Activated CD4-positive, alpha-beta T cell treated with anti-CD3 and anti-CD28 coated beads, Interleukin-2, amount 10 ng/mL, durations not matched to agents 24 days and 14 days (primary cell): ENCODE measurements at regions of chr6 and their contacts with region 1.

Region 1: DNA sequence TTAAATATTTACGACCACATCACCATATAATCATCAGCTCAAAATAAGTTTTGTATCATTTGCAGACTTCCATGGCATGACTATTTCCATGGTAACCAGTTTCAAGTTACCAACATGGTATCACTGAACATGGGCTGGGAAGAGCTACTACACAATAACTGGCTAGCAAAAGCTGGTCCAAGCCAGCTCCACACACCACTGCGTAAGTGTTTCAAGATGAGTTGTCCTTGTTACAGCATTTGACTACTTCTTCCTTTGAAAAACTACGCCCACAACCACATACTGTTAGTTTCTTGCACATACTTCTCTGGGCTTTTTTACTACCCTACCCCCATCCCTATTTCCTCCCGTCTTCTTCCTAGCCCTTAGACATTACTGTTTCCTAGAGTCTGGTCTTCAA is 8.5 kb downstream of the CD164 start:
- DNase-seq: peak; percentile 82
- H3K4me3 Mint-ChIP-seq: peak overlapping the region; percentile 85
- H3K27ac Mint-ChIP-seq: peak overlapping the region; percentile 99
- H3K4me1 Mint-ChIP-seq: peaks cover 56% of the 10 kb centered on the region
- H3K27me3 Mint-ChIP-seq: no peaks in the 10 kb centered on the region

Region 2: GRCh38 chr6:108883172-108883571 is 490.6 kb before region 1 on chr6:
- intact Hi-C with region 1: loop called (anchors 1 kb)
- DNase-seq: no peak
- H3K4me3 Mint-ChIP-seq: peak overlapping the region; percentile 24
- H3K27ac Mint-ChIP-seq: peak overlapping the region; percentile 87
- H3K4me1 Mint-ChIP-seq: peaks cover 31% of the 10 kb centered on the region
- H3K27me3 Mint-ChIP-seq: peaks cover 28% of the 10 kb centered on the region

Region 3: GRCh38 chr6:109095027-109095834 is 278.5 kb before region 1 on chr6 and contains the start of gene CEP57L1:
- intact Hi-C with region 1: loop called (anchors 2 kb)
- DNase-seq: peak; percentile 98
- H3K4me3 Mint-ChIP-seq: peak within 1 kb of the TSS; percentile 90
- H3K27ac Mint-ChIP-seq: peak within 1 kb of the TSS; percentile 100
- H3K4me1 Mint-ChIP-seq: peaks cover 53% of the 10 kb centered on the region
- H3K27me3 Mint-ChIP-seq: no peaks in the 10 kb centered on the region
- total RNA-seq, gene CEP57L1: 14.2 and 15.3 TPM in 2 replicates

Region 4: GRCh38 chr6:109187399-109188114 is 186.2 kb before region 1 on chr6:
- intact Hi-C with region 1: loop called (anchors 2 kb)
- DNase-seq: peak; percentile 87
- H3K4me3 Mint-ChIP-seq: no peak overlapping the region
- H3K27ac Mint-ChIP-seq: no peak overlapping the region
- H3K4me1 Mint-ChIP-seq: no peaks in the 10 kb centered on the region
- H3K27me3 Mint-ChIP-seq: peaks cover 36% of the 10 kb centered on the region

Region 5: GRCh38 chr6:109202409-109203284 is 171.1 kb before region 1 on chr6:
- intact Hi-C with region 1: loop called (anchors 1 kb)
- DNase-seq: no peak
- H3K4me3 Mint-ChIP-seq: no peak overlapping the region
- H3K27ac Mint-ChIP-seq: peak overlapping the region; percentile 78
- H3K4me1 Mint-ChIP-seq: peaks cover 3% of the 10 kb centered on the region
- H3K27me3 Mint-ChIP-seq: peaks cover 1% of the 10 kb centered on the region

Region 6: GRCh38 chr6:109308018-109308492 is 65.7 kb before region 1 on chr6:
- intact Hi-C with region 1: loop called (anchors 2 kb)
- DNase-seq: no peak
- H3K4me3 Mint-ChIP-seq: no peak overlapping the region
- H3K27ac Mint-ChIP-seq: no peak overlapping the region
- H3K4me1 Mint-ChIP-seq: peaks cover 17% of the 10 kb centered on the region
- H3K27me3 Mint-ChIP-seq: no peaks in the 10 kb centered on the region

Region 7: GRCh38 chr6:109389650-109390274 is 16.0 kb after region 1 on chr6:
- intact Hi-C with region 1: no loop called
- DNase-seq: no peak
- H3K4me3 Mint-ChIP-seq: no peak overlapping the region
- H3K27ac Mint-ChIP-seq: no peak overlapping the region
- H3K4me1 Mint-ChIP-seq: peaks cover 11% of the 10 kb centered on the region
- H3K27me3 Mint-ChIP-seq: peaks cover 7% of the 10 kb centered on the region